BJ (cell line): ENCODE measurements at regions of chr10 and their contacts with region 1.

Region 1: GRCh38 chr10:17257466-17258321 is 29.7 kb downstream of the VIM start:
- DNase-seq: no peak
- H3K4me3 ChIP-seq: no peak overlapping the region
- H3K27me3 ChIP-seq: no peaks in the 10 kb centered on the region
- CTCF ChIP-seq: peak; percentile 73

Region 2: DNA sequence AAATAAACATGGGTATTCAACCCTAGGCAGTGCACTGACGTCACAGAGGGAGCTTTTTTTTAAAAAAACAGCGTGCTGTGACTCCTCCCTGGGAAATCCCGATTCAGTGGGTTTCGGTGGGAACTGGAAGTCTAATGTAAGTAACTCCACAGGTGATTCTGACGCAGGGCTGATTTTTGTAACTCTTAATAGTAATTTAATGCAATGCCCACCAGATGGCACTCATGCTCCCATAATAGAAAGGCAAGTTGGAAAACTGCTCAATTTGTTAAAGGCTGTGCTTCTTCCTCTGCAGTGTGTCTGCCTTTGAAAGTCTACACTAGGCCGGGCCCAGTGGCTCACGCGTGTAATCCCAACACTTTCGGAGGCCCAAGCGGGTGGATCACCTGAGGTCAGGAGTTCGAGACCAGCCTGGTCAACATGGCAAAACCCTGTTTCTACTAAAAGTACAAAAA is 429.6 kb before region 1 on chr10:
- CTCF ChIA-PET with region 1: interaction called, 30 read pairs
- POLR2A ChIA-PET with region 1: no interaction called
- DNase-seq: no peak
- H3K4me3 ChIP-seq: no peak overlapping the region
- H3K27me3 ChIP-seq: no peaks in the 10 kb centered on the region
- CTCF ChIP-seq: peak; percentile 57

Region 3: GRCh38 chr10:16843252-16843870 is 414.3 kb before region 1 on chr10:
- CTCF ChIA-PET with region 1: interaction called, 11 read pairs
- POLR2A ChIA-PET with region 1: no interaction called
- DNase-seq: peak; percentile 47
- H3K4me3 ChIP-seq: no peak overlapping the region
- H3K27me3 ChIP-seq: no peaks in the 10 kb centered on the region
- CTCF ChIP-seq: peak; percentile 41